Gastrocnemius medialis (tissue), 4 donors: ENCODE measurements at regions of chr9 and their contacts with region 1.

Region 1: GRCh38 chr9:98796364-98797101 is at the start of gene ANKS6:
- DNase-seq: peak; percentile 49 to 65
- ATAC-seq: peak; percentile 93 to 95
- H3K4me3 ChIP-seq: peak within 1 kb of the TSS; percentile 60 to 92 (median 66)
- H3K27ac ChIP-seq: peak within 1 kb of the TSS; percentile 63 to 79 (median 71)
- H3K4me1 ChIP-seq: peaks cover 8 to 11% of the 10 kb centered on the region in 2 donors
- H3K27me3 ChIP-seq: no peaks in the 10 kb centered on the region
- CTCF ChIP-seq: peak in 4 of 5 experiments; percentile 61 to 74 (median 67)
- POLR2A ChIP-seq: peak in 1 of 2 donors; percentile 48
- total RNA-seq, gene ANKS6: 3.9 to 7.0 (median 4.4) TPM

Region 2: GRCh38 chr9:97632985-97633858 is 1163.3 kb before region 1 on chr9 and contains the starts of genes NCBP1 and TSTD2:
- in situ Hi-C with region 1: no loop called
- intact Hi-C with region 1: loop called (anchors 10 kb)
- DNase-seq: peak; percentile 96 to 98
- ATAC-seq: peak; percentile 87 to 88
- H3K4me3 ChIP-seq: peak within 1 kb of the TSS; percentile 86 to 92 (median 88)
- H3K27ac ChIP-seq: peak within 1 kb of the TSS; percentile 91 to 99 (median 98)
- H3K4me1 ChIP-seq: peaks cover 53 to 56% of the 10 kb centered on the region in 2 donors
- H3K27me3 ChIP-seq: no peaks in the 10 kb centered on the region
- CTCF ChIP-seq: peak in 1 of 5 experiments; percentile 8
- POLR2A ChIP-seq: peak; percentile 83 to 87
- total RNA-seq, gene NCBP1: 8.2 to 17.2 (median 15.7) TPM
- total RNA-seq, gene TSTD2: 11.6 to 19.9 (median 14.5) TPM

Region 3: GRCh38 chr9:97982683-97983588 is 813.6 kb before region 1 on chr9 and contains the start of gene ANP32B:
- in situ Hi-C with region 1: no loop called
- intact Hi-C with region 1: loop called (anchors 10 kb)
- DNase-seq: peak; percentile 73 to 85
- ATAC-seq: peak; percentile 55 to 59
- H3K4me3 ChIP-seq: peak within 1 kb of the TSS; percentile 84 to 99 (median 89)
- H3K27ac ChIP-seq: peak within 1 kb of the TSS; percentile 93 to 99 (median 96)
- H3K4me1 ChIP-seq: peaks cover 48 to 55% of the 10 kb centered on the region in 2 donors
- H3K27me3 ChIP-seq: no peaks in the 10 kb centered on the region
- CTCF ChIP-seq: peak; percentile 73 to 99 (median 97)
- POLR2A ChIP-seq: peak; percentile 58 to 63
- total RNA-seq, gene ANP32B: 8.2 to 24.5 (median 17.8) TPM

Region 4: DNA sequence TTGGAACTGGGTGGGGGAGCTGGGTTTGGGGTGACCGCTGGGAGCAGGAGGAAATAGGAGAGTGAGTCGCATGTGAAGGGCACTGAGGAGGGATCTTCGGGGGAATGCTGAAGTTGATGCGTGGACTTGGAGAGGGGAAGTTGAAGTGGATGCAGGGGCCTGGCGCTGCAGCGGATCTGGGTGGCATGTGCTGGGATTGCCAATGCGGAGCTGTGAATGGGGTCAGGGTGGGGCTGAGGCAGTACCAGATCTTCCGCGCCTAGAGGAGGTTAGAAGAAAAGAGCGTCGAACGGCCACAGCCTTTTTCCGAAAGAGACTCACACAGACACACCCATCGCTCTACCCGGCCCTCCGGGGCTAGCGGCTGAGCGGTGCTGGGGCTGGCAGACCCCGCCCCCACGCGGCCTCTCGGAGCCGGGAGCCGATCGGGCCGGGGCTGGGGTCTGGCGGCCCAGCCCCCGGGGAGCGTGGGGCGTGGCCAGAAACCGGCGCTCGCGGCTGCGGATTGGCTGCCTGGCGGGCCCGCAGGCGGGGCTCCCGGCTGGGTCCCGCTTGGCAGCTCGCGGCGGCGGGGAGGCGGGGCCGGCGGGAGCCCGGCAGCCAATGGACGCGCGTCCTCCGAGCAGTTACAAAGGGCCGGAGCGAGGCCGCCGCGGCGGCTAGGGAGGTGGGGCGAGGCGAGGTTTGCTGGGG is 308.1 kb after region 1 on chr9 and contains the start of gene TGFBR1:
- in situ Hi-C with region 1: no loop called
- intact Hi-C with region 1: loop called (anchors 10 kb)
- DNase-seq: peak; percentile 87 to 91
- ATAC-seq: peak; percentile 86 to 89
- H3K4me3 ChIP-seq: peak within 1 kb of the TSS; percentile 73 to 97 (median 86)
- H3K27ac ChIP-seq: peak within 1 kb of the TSS; percentile 80 to 91 (median 88)
- H3K4me1 ChIP-seq: peaks cover 39 to 50% of the 10 kb centered on the region in 2 donors
- H3K27me3 ChIP-seq: no peaks in the 10 kb centered on the region
- CTCF ChIP-seq: no peak
- POLR2A ChIP-seq: peak; percentile 94 to 98
- total RNA-seq, gene TGFBR1: 13.5 to 19.0 (median 14.3) TPM